Gastrocnemius medialis (tissue), 4 donors: ENCODE measurements at regions of chr16 and their contacts with region 1.

Region 1: GRCh38 chr16:82660075-82660645 is 33.4 kb downstream of the CDH13 start:
- DNase-seq: peak; percentile 86 to 93
- ATAC-seq: peak; percentile 93 to 96
- H3K4me3 ChIP-seq: peak overlapping the region; percentile 41 to 56 (median 47)
- H3K27ac ChIP-seq: peak overlapping the region; percentile 92 to 95 (median 94)
- H3K4me1 ChIP-seq: peaks cover 29 to 34% of the 10 kb centered on the region in 2 donors
- H3K27me3 ChIP-seq: no peaks in the 10 kb centered on the region
- CTCF ChIP-seq: no peak
- POLR2A ChIP-seq: peak; percentile 62 to 75

Region 2: GRCh38 chr16:82631701-82632685 is 28.2 kb before region 1 on chr16:
- in situ Hi-C with region 1: no loop called
- intact Hi-C with region 1: loop called (anchors 1 kb)
- DNase-seq: peak; percentile 82 to 90
- ATAC-seq: peak; percentile 68 to 83
- H3K4me3 ChIP-seq: no peak overlapping the region
- H3K27ac ChIP-seq: peak overlapping the region; percentile 86 to 93 (median 88)
- H3K4me1 ChIP-seq: peaks cover 74 to 79% of the 10 kb centered on the region in 2 donors
- H3K27me3 ChIP-seq: no peaks in the 10 kb centered on the region
- CTCF ChIP-seq: peak in 3 of 5 experiments; percentile 13 to 45 (median 16)
- POLR2A ChIP-seq: no peak

Region 3: DNA sequence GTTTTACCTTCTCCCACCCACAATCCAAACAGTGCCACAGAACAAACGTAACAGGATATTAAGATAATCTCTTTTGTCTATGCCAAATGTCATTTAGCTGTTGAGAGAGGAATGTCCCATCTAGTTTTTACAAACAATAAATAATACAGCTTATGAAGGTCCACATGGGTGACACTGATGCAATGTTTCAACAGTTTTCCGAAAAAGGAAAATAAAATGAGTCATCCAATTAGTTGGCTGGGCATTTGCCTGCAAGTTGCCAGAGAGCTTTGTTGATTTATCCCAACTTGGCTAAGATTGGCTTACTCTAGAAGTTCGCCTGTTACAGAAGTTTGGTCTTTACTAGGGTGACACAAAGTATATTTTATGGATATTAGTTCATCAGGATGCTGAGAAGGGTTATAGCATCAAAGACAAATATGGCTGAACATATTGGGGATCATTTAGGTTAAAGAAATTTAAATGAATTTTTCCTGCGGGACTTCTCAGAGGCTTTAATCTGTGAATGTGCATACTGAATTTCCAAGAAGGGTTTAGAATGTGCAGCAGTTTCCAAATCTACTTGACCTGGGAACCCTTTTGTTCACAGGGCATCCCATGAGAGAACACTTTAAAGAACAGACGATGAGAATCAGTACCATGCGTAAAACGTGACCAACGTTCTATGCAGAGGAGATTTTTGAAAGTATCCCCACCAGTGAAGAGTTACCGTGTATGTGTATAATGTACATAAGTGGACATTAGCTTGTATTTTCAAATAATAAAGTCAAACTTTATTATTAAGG is 39.7 kb after region 1 on chr16:
- in situ Hi-C with region 1: no loop called
- intact Hi-C with region 1: loop called (anchors 5 kb)
- DNase-seq: peak in 1 of 2 donors; percentile 14
- ATAC-seq: peak; percentile 87 to 93
- H3K4me3 ChIP-seq: peak overlapping the region in 1 of 4 donors; percentile 2
- H3K27ac ChIP-seq: peak overlapping the region; percentile 51 to 76 (median 69)
- H3K4me1 ChIP-seq: peaks cover 43 to 51% of the 10 kb centered on the region in 2 donors
- H3K27me3 ChIP-seq: no peaks in the 10 kb centered on the region
- CTCF ChIP-seq: no peak
- POLR2A ChIP-seq: no peak